Mammary epithelial cell (primary cell): ENCODE measurements at regions of chr1 and their contacts with region 1.

Region 1: DNA sequence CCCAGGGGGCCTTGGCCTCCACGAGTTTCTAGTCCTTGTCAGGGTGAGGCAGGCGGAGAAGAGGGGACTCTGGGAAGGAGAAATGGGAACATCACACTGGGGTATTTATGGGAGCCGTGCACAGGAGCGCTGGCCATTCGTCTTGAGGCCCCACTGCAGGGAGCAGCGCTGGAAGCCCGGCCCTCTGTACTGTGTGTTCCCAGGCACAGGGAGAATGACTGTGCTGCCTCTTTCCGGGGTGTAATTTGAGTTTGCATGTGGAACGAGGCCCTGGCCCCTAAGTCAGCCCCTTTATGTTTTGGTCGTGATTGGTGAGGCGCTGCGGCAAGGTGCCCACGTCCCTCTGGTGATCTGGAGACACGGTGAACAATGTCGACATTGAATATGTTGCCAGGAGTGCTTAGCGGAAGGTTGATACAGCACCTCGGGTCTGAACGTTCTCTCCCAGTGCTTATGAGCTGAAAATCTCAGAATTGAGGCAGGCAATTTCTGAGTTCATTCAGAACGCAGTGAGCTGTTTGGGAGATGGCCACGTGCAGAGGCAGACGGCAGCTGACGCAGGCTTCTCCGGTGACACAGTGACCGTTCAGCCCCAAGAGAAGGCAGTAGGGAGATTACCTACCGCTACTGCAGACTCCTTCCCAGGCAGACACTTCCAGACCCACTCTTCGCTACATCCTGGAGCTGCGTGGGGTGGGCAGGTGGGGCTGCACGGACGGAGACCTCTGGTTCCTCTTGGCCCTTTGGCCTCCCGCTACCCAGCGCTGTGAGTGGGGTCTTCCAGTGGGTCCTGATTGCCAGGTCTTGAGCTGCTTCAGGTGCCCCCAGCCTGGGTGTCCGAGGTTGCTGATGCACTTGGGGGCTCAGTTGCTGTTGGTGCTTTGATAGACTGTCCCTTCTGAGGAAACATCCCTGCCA is 265.8 kb downstream of the CAMTA1 start:
- DNase-seq: no peak
- H3K4me3 ChIP-seq: no peak overlapping the region
- H3K27ac ChIP-seq: no peak overlapping the region
- H3K4me1 ChIP-seq: peaks cover 5% of the 10 kb centered on the region
- H3K27me3 ChIP-seq: no peaks in the 10 kb centered on the region
- CTCF ChIP-seq: no peak

Region 2: DNA sequence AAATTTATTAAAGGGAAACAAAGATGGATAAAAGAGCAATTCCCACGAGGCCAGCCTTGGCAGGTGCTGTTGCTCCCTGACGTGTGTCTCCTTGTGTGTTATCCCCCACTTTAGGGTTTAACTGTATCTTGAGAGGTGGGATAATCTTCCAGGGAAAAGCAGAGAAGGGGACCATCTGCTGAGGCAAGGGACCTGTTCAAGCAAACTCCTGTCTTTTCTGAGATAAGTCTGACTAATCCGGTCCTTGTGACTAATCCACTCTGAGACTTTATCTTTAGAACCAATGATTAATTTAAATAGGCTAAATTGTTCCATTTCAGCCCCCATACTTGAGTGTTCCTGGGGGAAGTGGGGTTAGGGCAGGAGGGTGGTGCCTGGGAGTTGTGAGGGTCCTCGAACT is 102.1 kb before region 1 on chr1:
- CTCF ChIA-PET with region 1: no interaction called
- dilution Hi-C with region 1: no loop called
- in situ Hi-C with region 1: no loop called
- intact Hi-C with region 1: no loop called
- DNase-seq: no peak
- H3K4me3 ChIP-seq: no peak overlapping the region
- H3K27ac ChIP-seq: no peak overlapping the region
- H3K4me1 ChIP-seq: no peaks in the 10 kb centered on the region
- H3K27me3 ChIP-seq: no peaks in the 10 kb centered on the region
- CTCF ChIP-seq: no peak

Region 3: GRCh38 chr1:7136166-7136953 is 85.3 kb after region 1 on chr1:
- CTCF ChIA-PET with region 1: no interaction called
- dilution Hi-C with region 1: loop called (anchors 5 kb)
- in situ Hi-C with region 1: no loop called
- intact Hi-C with region 1: no loop called
- DNase-seq: no peak
- H3K4me3 ChIP-seq: no peak overlapping the region
- H3K27ac ChIP-seq: no peak overlapping the region
- H3K4me1 ChIP-seq: peaks cover 10% of the 10 kb centered on the region
- H3K27me3 ChIP-seq: no peaks in the 10 kb centered on the region
- CTCF ChIP-seq: no peak

Region 4: DNA sequence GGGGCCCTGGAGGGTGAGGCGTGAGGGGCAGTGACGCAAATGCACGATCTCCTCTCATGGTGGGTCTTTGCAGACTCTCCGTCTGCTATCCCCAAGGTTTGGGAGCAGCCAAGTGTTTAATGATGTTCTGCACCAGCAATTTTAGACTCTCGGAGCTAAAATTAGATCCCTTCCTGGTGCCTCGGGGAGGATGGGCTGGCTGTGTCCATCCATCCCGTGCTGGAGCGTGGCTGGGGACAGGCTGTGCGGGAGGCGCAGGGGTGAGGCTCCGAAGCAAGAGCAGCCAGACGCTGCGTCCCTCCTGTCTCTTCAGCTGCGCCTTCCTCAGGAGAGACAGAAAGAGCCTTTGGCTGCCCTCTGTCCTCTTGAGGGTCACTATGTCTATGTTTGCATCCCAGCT is 121.8 kb after region 1 on chr1:
- CTCF ChIA-PET with region 1: no interaction called
- dilution Hi-C with region 1: no loop called
- in situ Hi-C with region 1: no loop called
- intact Hi-C with region 1: no loop called
- DNase-seq: no peak
- H3K4me3 ChIP-seq: no peak overlapping the region
- H3K27ac ChIP-seq: no peak overlapping the region
- H3K4me1 ChIP-seq: no peaks in the 10 kb centered on the region
- H3K27me3 ChIP-seq: no peaks in the 10 kb centered on the region
- CTCF ChIP-seq: no peak